Esophagus muscularis mucosa (tissue), 4 donors: ENCODE measurements at regions of chr6 and their contacts with region 1.

Region 1: DNA sequence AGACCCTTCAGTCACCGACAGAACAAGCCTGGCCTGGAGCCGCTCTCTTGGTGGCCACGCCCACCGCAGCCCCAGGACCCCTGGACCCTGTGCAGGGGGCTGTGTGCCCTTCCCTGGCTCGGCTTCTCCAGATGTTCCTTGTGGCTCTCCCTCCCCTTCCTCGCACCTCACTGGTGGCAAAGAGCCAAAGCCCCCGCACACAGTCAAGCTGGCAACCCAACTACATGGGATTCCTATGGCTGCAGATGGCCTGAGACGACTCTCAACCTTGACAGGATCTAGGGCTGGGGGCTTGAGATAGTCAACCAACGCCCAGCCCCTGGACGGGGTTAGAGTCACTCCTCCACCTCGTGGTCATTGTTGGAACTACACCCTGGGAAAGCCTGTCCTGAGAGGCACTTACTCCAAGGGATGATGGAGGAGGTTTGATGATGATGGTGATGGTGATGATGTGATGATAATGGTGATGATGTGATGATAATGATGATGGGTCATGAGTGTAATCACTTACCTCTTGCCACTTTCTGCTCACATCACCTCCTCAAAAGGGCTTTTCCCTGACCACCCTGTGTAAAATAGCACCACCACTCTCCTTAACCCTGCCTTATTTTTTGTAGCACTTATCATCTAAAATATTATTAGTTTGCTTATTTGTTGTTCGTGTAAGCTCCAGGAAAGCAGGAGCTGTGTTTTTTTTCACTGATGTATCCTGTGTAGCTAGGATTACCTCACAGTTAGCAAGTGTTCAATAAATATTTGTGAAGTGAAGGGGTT is 278.4 kb downstream of the LRFN2 start:
- DNase-seq: no peak
- H3K4me3 ChIP-seq: no peak overlapping the region
- H3K27ac ChIP-seq: no peak overlapping the region
- H3K4me1 ChIP-seq: peaks cover 0 to 7% (median 4%) of the 10 kb centered on the region in 4 donors
- H3K27me3 ChIP-seq: peaks cover 0 to 13% (median 0%) of the 10 kb centered on the region in 4 donors
- CTCF ChIP-seq: peak; percentile 80 to 95 (median 86)
- EP300 ChIP-seq: no peak
- POLR2A ChIP-seq: no peak

Region 2: DNA sequence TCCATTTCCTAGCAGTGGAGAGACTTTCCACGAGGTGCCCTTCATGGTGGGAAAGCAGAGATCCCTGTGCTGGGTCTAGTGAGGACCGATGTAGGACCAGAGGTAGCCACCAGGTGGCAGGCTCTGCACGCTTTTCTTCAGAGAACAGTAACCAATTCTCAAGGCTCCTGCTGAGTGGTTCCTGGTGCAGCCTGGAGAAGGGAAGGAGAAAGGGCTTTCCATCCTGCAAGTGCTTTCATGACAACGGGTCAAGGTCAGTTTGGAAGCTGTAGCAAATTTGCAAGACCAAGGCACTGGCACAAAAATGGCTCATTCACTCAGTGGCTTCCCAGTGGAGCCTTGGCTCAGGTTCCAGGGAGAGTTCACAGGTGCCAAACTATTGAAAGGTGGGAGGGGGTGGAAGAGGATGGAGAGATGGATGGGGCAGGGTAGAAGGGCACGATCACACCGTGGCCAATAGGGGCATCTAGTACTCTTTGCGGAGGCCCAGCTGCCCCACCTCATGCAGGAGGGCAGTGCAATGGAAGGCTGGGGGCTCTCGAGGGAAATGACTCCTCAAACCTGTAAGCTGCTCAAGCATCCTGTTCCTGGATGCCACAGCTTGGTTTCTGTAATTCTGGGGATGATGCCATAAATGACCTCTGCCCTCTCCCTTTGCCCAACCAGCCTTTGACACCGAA is 960.7 kb before region 1 on chr6:
- intact Hi-C with region 1: loop called (anchors 5 kb)
- DNase-seq: peak; percentile 93
- H3K4me3 ChIP-seq: no peak overlapping the region
- H3K27ac ChIP-seq: no peak overlapping the region
- H3K4me1 ChIP-seq: peaks cover 0 to 3% (median 2%) of the 10 kb centered on the region in 4 donors
- H3K27me3 ChIP-seq: no peaks in the 10 kb centered on the region
- CTCF ChIP-seq: peak; percentile 87 to 93 (median 90)
- EP300 ChIP-seq: no peak
- POLR2A ChIP-seq: no peak

Region 3: GRCh38 chr6:39361657-39362486 is 946.8 kb before region 1 on chr6:
- intact Hi-C with region 1: loop called (anchors 5 kb)
- DNase-seq: no peak
- H3K4me3 ChIP-seq: no peak overlapping the region
- H3K27ac ChIP-seq: peak overlapping the region in 1 of 4 donors; percentile 24
- H3K4me1 ChIP-seq: peaks cover 5 to 16% (median 13%) of the 10 kb centered on the region in 4 donors
- H3K27me3 ChIP-seq: no peaks in the 10 kb centered on the region
- CTCF ChIP-seq: peak; percentile 67 to 82 (median 72)
- EP300 ChIP-seq: no peak
- POLR2A ChIP-seq: no peak

Region 4: DNA sequence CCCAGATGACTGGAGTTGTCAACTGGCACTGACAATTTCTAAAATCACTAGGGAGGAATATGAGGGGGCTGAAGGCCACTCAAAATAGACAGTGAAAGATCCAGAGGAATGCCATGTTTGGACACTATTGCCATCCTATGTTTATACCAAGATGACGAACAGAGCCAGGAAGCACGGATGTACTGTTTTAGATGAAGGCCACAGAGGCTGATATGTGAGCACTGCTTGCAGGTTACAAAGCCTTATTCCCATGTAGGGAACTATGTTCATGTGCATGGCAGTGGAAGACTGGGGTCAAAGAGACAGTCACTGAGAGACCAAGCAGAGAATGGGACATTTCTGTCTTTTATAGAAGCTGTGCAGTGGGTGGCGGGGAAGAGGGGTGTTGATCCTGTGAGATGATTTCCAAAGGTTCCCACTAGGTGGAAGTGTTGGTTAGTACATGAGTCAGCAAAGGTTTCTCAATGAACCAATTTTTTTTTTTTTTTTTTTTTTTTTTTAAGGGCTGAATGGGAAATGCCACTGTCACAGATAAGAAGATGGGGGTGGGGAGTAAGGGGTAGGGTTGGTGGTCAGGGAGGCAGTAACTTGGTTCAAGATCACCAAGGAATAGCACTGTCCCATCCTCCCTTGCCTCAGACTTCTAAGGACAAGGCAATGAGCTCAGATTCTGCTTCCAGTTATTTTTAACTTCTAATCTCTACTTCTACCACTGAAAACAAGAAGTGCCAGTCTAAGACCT is 327.7 kb before region 1 on chr6:
- intact Hi-C with region 1: loop called (anchors 5 kb)
- DNase-seq: peak; percentile 64
- H3K4me3 ChIP-seq: no peak overlapping the region
- H3K27ac ChIP-seq: peak overlapping the region in 3 of 4 donors; percentile 34 to 47 (median 39)
- H3K4me1 ChIP-seq: peaks cover 8 to 27% (median 20%) of the 10 kb centered on the region in 4 donors
- H3K27me3 ChIP-seq: no peaks in the 10 kb centered on the region
- CTCF ChIP-seq: peak; percentile 55 to 65 (median 59)
- EP300 ChIP-seq: no peak
- POLR2A ChIP-seq: no peak

Region 5: DNA sequence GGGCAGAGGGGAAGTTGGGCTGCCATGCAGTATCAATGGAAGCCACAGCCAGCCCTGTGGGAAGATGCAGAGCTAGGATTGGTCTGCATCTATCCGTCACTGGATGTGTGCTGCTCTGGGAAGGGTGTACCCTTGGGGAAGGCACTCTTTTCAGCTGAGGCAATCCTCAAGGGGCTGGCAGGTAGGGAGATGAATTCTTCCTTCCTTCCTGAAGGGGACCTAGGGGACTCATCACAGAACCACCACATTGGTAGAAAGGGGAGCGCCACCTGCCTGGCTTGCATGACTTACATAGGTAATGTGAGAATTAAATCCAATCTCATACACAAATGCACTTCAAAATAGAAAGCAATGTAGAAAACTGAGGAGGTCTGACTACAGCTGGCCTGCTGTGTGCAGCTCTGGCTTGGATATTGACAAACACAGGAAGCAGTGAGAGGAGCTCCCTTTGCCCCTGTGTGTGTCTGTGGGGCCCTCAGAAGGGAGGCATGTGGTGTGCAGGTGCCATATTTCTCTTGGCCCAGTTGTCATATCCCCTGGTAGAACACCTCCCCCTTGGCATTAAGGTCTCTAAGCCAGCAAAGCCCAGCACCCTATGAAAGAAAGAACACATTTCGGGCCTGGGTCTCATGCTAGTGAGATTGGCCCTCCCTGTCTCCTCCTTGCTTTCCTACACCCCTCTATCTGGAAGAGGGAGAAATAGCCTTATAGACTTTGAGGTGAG is 114.1 kb before region 1 on chr6:
- intact Hi-C with region 1: no loop called
- DNase-seq: peak; percentile 90
- H3K4me3 ChIP-seq: no peak overlapping the region
- H3K27ac ChIP-seq: no peak overlapping the region
- H3K4me1 ChIP-seq: no peaks in the 10 kb centered on the region
- H3K27me3 ChIP-seq: no peaks in the 10 kb centered on the region
- CTCF ChIP-seq: no peak
- EP300 ChIP-seq: no peak
- POLR2A ChIP-seq: no peak